Mammary epithelial cell (primary cell): ENCODE measurements at regions of chr15 and their contacts with region 1.

Region 1: DNA sequence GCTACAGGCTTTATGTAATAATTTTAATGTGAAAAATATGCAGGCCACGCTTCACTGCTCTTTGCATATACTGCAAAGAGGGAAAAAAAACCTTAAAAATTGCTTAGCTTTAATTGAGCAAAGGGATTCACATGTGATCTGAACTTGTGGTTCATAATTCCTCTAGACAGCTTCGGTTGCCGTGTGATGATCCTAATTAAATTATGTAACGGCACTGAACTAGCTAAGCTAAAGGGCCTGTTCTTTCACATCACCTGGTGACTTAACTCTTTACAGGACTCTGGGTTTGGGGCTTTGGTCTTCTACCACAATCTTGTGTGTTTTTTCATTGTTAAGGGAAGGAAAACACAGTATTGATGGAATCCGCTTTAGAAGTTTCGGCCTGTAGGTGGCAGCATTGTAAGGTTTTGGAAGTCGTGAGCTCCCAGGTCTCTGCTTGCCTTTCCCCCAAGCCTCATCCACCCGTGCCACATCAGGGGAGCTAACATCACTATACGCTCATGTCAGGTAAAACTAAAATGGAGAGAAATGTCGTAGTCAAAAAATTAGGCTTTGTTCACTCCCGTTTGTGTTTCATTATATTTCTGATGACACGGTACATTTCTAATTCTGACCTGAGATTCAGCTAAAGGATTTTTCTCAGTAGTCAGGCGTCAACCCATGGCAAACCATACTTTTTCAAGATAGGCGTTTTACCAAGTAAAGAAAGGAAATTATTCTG is 205.6 kb upstream of the DPH6 start:
- DNase-seq: peak; percentile 57
- H3K4me3 ChIP-seq: no peak overlapping the region
- H3K27ac ChIP-seq: no peak overlapping the region
- H3K4me1 ChIP-seq: no peaks in the 10 kb centered on the region
- H3K27me3 ChIP-seq: no peaks in the 10 kb centered on the region
- CTCF ChIP-seq: peak; percentile 74 to 82

Region 2: GRCh38 chr15:35519541-35520149 is 231.9 kb before region 1 on chr15:
- CTCF ChIA-PET with region 1: interaction called, 7 read pairs
- dilution Hi-C with region 1: no loop called
- in situ Hi-C with region 1: no loop called
- intact Hi-C with region 1: loop called (anchors 1 kb)
- DNase-seq: peak; percentile 35
- H3K4me3 ChIP-seq: no peak overlapping the region
- H3K27ac ChIP-seq: no peak overlapping the region
- H3K4me1 ChIP-seq: no peaks in the 10 kb centered on the region
- H3K27me3 ChIP-seq: no peaks in the 10 kb centered on the region
- CTCF ChIP-seq: peak; percentile 49 to 62

Region 3: GRCh38 chr15:35545824-35546510 is 205.6 kb before region 1 on chr15 and contains the start of gene DPH6:
- CTCF ChIA-PET with region 1: no interaction called
- dilution Hi-C with region 1: no loop called
- in situ Hi-C with region 1: no loop called
- intact Hi-C with region 1: loop called (anchors 5 kb)
- DNase-seq: peak; percentile 84
- H3K4me3 ChIP-seq: peak within 1 kb of the TSS; percentile 71 to 96 (median 71)
- H3K27ac ChIP-seq: peak within 1 kb of the TSS; percentile 88
- H3K4me1 ChIP-seq: peaks cover 3% of the 10 kb centered on the region
- H3K27me3 ChIP-seq: no peaks in the 10 kb centered on the region
- CTCF ChIP-seq: no peak
- total RNA-seq, gene DPH6: 16.3 to 17.0 TPM

Region 4: GRCh38 chr15:35697549-35698299 is 53.8 kb before region 1 on chr15:
- CTCF ChIA-PET with region 1: no interaction called
- dilution Hi-C with region 1: no loop called
- in situ Hi-C with region 1: no loop called
- intact Hi-C with region 1: loop called (anchors 2 kb)
- DNase-seq: no peak
- H3K4me3 ChIP-seq: no peak overlapping the region
- H3K27ac ChIP-seq: peak overlapping the region; percentile 69
- H3K4me1 ChIP-seq: peaks cover 23% of the 10 kb centered on the region
- H3K27me3 ChIP-seq: no peaks in the 10 kb centered on the region
- CTCF ChIP-seq: peak; percentile 2 to 40

Region 5: GRCh38 chr15:35912196-35912595 is 160.6 kb after region 1 on chr15:
- CTCF ChIA-PET with region 1: no interaction called
- dilution Hi-C with region 1: no loop called
- in situ Hi-C with region 1: no loop called
- intact Hi-C with region 1: loop called (anchors 5 kb)
- DNase-seq: peak; percentile 5
- H3K4me3 ChIP-seq: no peak overlapping the region
- H3K27ac ChIP-seq: no peak overlapping the region
- H3K4me1 ChIP-seq: no peaks in the 10 kb centered on the region
- H3K27me3 ChIP-seq: no peaks in the 10 kb centered on the region
- CTCF ChIP-seq: peak in 1 of 2 donors; percentile 55

Region 6: DNA sequence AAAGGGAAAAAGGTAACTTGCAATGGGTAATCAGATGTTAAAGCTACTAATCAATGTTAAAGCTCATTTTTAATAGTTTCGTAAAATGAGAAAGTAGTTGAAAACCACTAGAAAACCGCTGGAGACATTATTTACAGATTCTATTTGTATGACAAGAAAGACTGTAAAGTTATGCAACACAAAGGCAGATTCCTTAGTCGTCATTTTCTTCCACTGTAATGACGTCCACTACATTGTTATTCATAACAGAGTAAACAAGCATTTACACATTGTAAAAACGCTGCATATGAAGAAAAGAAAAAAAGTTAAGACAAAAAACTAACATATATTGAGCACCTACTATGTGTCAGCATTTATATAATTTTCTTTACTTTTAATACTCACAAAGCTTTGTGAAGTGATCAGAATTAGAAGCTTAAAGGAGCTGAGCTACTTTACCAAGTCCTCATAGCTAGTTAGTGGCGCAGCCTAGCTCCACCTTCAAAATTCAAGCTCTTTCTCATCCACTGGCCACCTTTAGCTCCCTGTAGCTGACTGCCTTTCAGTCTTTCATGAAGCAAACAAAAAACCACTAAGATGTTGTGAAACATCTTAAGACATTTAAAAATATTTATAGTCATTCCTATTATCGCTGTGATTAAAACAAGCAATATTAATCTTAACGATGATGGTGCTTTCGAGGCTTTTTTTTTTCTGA is 727.8 kb after region 1 on chr15:
- CTCF ChIA-PET with region 1: interaction called, 14 read pairs
- dilution Hi-C with region 1: no loop called
- in situ Hi-C with region 1: no loop called
- intact Hi-C with region 1: no loop called
- DNase-seq: no peak
- H3K4me3 ChIP-seq: no peak overlapping the region
- H3K27ac ChIP-seq: no peak overlapping the region
- H3K4me1 ChIP-seq: no peaks in the 10 kb centered on the region
- H3K27me3 ChIP-seq: no peaks in the 10 kb centered on the region
- CTCF ChIP-seq: no peak

Region 7: GRCh38 chr15:37134699-37135131 is 1383.1 kb after region 1 on chr15:
- CTCF ChIA-PET with region 1: no interaction called
- dilution Hi-C with region 1: no loop called
- in situ Hi-C with region 1: no loop called
- intact Hi-C with region 1: loop called (anchors 10 kb)
- DNase-seq: peak; percentile 10
- H3K4me3 ChIP-seq: no peak overlapping the region
- H3K27ac ChIP-seq: no peak overlapping the region
- H3K4me1 ChIP-seq: no peaks in the 10 kb centered on the region
- H3K27me3 ChIP-seq: peaks cover 4% of the 10 kb centered on the region
- CTCF ChIP-seq: peak; percentile 64 to 67